CD8-positive, alpha-beta memory T cell (primary cell): ENCODE measurements at regions of chr2 and their contacts with region 1.

Region 1: DNA sequence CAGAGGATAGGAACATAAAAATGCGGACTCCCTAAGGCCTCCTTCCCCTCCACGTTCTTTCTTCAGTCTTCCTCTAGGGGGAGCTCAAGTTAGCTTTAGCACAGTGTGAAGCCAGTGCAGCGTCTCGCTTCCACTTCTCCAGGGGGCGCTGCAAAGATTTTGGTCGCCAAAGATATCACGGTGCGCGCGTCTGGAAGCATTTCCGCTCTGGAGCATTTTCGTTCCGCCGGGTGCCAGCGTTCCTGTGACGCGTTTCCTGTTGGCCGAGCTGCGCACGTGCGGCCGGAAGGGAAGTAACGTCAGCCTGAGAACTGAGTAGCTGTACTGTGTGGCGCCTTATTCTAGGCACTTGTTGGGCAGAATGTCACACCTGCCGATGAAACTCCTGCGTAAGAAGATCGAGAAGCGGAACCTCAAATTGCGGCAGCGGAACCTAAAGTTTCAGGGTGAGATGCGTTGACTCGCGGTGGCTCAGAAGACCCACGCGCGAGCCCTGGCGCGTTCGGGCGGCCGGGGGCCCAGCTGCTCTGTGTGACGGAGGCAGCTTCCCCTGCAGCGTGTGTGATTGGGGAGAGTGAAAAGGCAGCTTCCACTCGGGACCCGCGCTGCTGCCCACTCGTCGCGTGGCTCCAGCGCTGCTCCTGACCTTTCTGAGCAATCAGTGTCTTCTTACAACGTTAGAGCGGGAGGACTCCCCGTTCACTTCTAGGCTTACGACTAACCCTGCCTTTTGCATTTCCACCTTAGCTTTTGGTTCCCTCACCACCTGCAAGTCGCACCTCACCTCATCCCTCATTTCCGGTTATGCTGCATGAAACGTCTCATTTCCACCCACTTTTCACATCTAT is at the start of gene DDX18:
- DNase-seq: peak; percentile 96 to 99 (median 98)
- H3K4me3 ChIP-seq: peak within 1 kb of the TSS; percentile 78
- H3K4me3 Mint-ChIP-seq: peak within 1 kb of the TSS; percentile 82 to 97 (median 92)
- H3K27ac ChIP-seq: peak within 1 kb of the TSS; percentile 95
- H3K27ac Mint-ChIP-seq: peak within 1 kb of the TSS; percentile 95 to 100 (median 99)
- H3K4me1 ChIP-seq: peaks cover 23% of the 10 kb centered on the region
- H3K4me1 Mint-ChIP-seq: peaks cover 39 to 64% (median 62%) of the 10 kb centered on the region in 3 donors
- H3K27me3 ChIP-seq: no peaks in the 10 kb centered on the region
- H3K27me3 Mint-ChIP-seq: peaks cover 0 to 5% of the 10 kb centered on the region in 2 donors
- total RNA-seq, gene DDX18: 147 to 151 TPM

Region 2: GRCh38 chr2:117801826-117802225 is 12.8 kb before region 1 on chr2:
- CTCF ChIA-PET with region 1: interaction called, 17 read pairs
- POLR2A ChIA-PET with region 1: no interaction called
- DNase-seq: no peak
- H3K4me3 ChIP-seq: no peak overlapping the region
- H3K4me3 Mint-ChIP-seq: no peak overlapping the region
- H3K27ac ChIP-seq: no peak overlapping the region
- H3K27ac Mint-ChIP-seq: peak overlapping the region in 1 of 8 donors; percentile 7
- H3K4me1 ChIP-seq: no peaks in the 10 kb centered on the region
- H3K4me1 Mint-ChIP-seq: peaks cover 0 to 6% (median 3%) of the 10 kb centered on the region in 3 donors
- H3K27me3 ChIP-seq: no peaks in the 10 kb centered on the region
- H3K27me3 Mint-ChIP-seq: peaks cover 31 to 44% of the 10 kb centered on the region in 2 donors

Region 3: GRCh38 chr2:117825437-117825836 is 10.8 kb after region 1 on chr2:
- CTCF ChIA-PET with region 1: interaction called, 12 read pairs
- POLR2A ChIA-PET with region 1: no interaction called
- DNase-seq: no peak
- H3K4me3 ChIP-seq: no peak overlapping the region
- H3K4me3 Mint-ChIP-seq: no peak overlapping the region
- H3K27ac ChIP-seq: no peak overlapping the region
- H3K27ac Mint-ChIP-seq: peak overlapping the region in 3 of 8 donors; percentile 5 to 98 (median 79)
- H3K4me1 ChIP-seq: no peaks in the 10 kb centered on the region
- H3K4me1 Mint-ChIP-seq: peaks cover 0 to 5% (median 0%) of the 10 kb centered on the region in 3 donors
- H3K27me3 ChIP-seq: no peaks in the 10 kb centered on the region
- H3K27me3 Mint-ChIP-seq: peaks cover 0 to 1% of the 10 kb centered on the region in 2 donors

Region 4: GRCh38 chr2:118013724-118014491 is 199.3 kb after region 1 on chr2 and contains the start of gene CCDC93:
- CTCF ChIA-PET with region 1: interaction called, 12 read pairs
- POLR2A ChIA-PET with region 1: interaction called, 3 read pairs
- DNase-seq: peak; percentile 83 to 92 (median 89)
- H3K4me3 ChIP-seq: peak within 1 kb of the TSS; percentile 99
- H3K4me3 Mint-ChIP-seq: peak within 1 kb of the TSS; percentile 90 to 98 (median 96)
- H3K27ac ChIP-seq: peak within 1 kb of the TSS; percentile 94
- H3K27ac Mint-ChIP-seq: peak within 1 kb of the TSS; percentile 80 to 98 (median 94)
- H3K4me1 ChIP-seq: peaks cover 22% of the 10 kb centered on the region
- H3K4me1 Mint-ChIP-seq: peaks cover 33 to 48% (median 40%) of the 10 kb centered on the region in 3 donors
- H3K27me3 ChIP-seq: no peaks in the 10 kb centered on the region
- H3K27me3 Mint-ChIP-seq: peaks cover 8 to 14% of the 10 kb centered on the region in 2 donors
- total RNA-seq, gene CCDC93: 32.7 to 33.5 TPM

Region 5: GRCh38 chr2:118309946-118310680 is 495.5 kb after region 1 on chr2:
- CTCF ChIA-PET with region 1: no interaction called
- POLR2A ChIA-PET with region 1: no interaction called
- DNase-seq: peak; percentile 26 to 73 (median 66)
- H3K4me3 ChIP-seq: peak overlapping the region; percentile 74
- H3K4me3 Mint-ChIP-seq: peak overlapping the region; percentile 86 to 97 (median 90)
- H3K27ac ChIP-seq: peak overlapping the region; percentile 53
- H3K27ac Mint-ChIP-seq: peak overlapping the region; percentile 86 to 95 (median 94)
- H3K4me1 ChIP-seq: peaks cover 7% of the 10 kb centered on the region
- H3K4me1 Mint-ChIP-seq: peaks cover 4 to 19% (median 10%) of the 10 kb centered on the region in 3 donors
- H3K27me3 ChIP-seq: no peaks in the 10 kb centered on the region
- H3K27me3 Mint-ChIP-seq: peaks cover 0 to 17% of the 10 kb centered on the region in 2 donors